Activated T-helper 1 cell treated with anti-CD3 and anti-CD28 coated beads, Interleukin-12 subunit alpha, Interleukin-12 subunit beta, Interleukin-2, Interleukin-4 antibody, amounts not matched to agents 30 ng/mL and 10 ng/mL and 1 ng/mL, durations not matched to agents 14 hours and 24 hours and 36 hours (primary cell): ENCODE measurements at regions of chr1 and their contacts with region 1.

Region 1: GRCh38 chr1:67089685-67090208 is 35.8 kb upstream of the SLC35D1 start:
- DNase-seq: no peak
- H3K4me3 Mint-ChIP-seq: no peak overlapping the region
- H3K27ac Mint-ChIP-seq: no peak overlapping the region
- H3K4me1 Mint-ChIP-seq: no peaks in the 10 kb centered on the region
- H3K27me3 Mint-ChIP-seq: peaks cover 15% of the 10 kb centered on the region

Region 2: DNA sequence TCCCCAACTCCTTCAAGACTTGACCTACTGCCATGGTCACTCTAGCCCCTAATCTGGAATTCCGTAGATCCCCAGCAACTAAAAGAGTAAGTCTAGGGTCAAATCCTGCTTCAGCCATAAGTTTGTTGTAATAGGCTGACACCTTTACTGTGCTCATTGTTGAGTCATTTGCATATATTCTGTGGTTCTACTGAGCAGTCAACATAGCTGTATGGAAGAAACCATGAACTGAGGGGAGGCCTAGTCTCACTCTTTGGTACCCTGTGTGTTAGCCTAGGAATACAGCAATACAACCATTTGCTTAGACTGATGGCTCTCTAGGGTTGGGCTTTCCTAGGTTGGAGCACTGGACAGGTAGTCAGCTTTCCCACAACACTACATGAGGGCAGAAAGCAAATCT is 12.2 kb before region 1 on chr1:
- intact Hi-C with region 1: loop called (anchors 2 kb)
- DNase-seq: no peak
- H3K4me3 Mint-ChIP-seq: no peak overlapping the region
- H3K27ac Mint-ChIP-seq: no peak overlapping the region
- H3K4me1 Mint-ChIP-seq: no peaks in the 10 kb centered on the region
- H3K27me3 Mint-ChIP-seq: no peaks in the 10 kb centered on the region